ENCODE measurements at regions of chr21 and their contacts with region 1.

Region 1: GRCh38 chr21:32437729-32438128 is 25.2 kb downstream of the EVA1C start:
- DNase-seq: no peak
- H3K4me3 ChIP-seq: no peak overlapping the region
- H3K27ac ChIP-seq: no peak overlapping the region
- H3K4me1 ChIP-seq: no peaks in the 10 kb centered on the region
- H3K27me3 ChIP-seq: no peaks in the 10 kb centered on the region
- CTCF ChIP-seq: no peak

Region 2: GRCh38 chr21:32392880-32393676 is 44.7 kb before region 1 on chr21 and contains the start of gene URB1:
- CTCF ChIA-PET with region 1: no interaction called
- POLR2A ChIA-PET with region 1: no interaction called
- intact Hi-C with region 1: loop called (anchors 2 kb)
- DNase-seq: peak; percentile 69 to 92
- H3K4me3 ChIP-seq: peak within 1 kb of the TSS; percentile 91
- H3K27ac ChIP-seq: peak within 1 kb of the TSS; percentile 80
- H3K4me1 ChIP-seq: peaks cover 19% of the 10 kb centered on the region
- H3K27me3 ChIP-seq: no peaks in the 10 kb centered on the region
- CTCF ChIP-seq: no peak
- total RNA-seq, gene URB1: 11.0 TPM in 2 replicates

Region 3: GRCh38 chr21:32457360-32457840 is 19.7 kb after region 1 on chr21:
- CTCF ChIA-PET with region 1: no interaction called
- POLR2A ChIA-PET with region 1: no interaction called
- intact Hi-C with region 1: loop called (anchors 2 kb)
- DNase-seq: peak; percentile 27 to 50
- H3K4me3 ChIP-seq: no peak overlapping the region
- H3K27ac ChIP-seq: no peak overlapping the region
- H3K4me1 ChIP-seq: peaks cover 4% of the 10 kb centered on the region; the same call in 1 of the 2 replicates
- H3K27me3 ChIP-seq: no peaks in the 10 kb centered on the region
- CTCF ChIP-seq: no peak